IMR-90 (cell line): ENCODE measurements at regions of chr1 and their contacts with region 1.

Region 1: GRCh38 chr1:202750758-202751157 is 40.5 kb upstream of the SYT2 start:
- DNase-seq: no peak
- ATAC-seq: no peak
- H3K4me3 ChIP-seq: no peak overlapping the region
- H3K27ac ChIP-seq: no peak overlapping the region
- H3K4me1 ChIP-seq: 0 out of 2 replicates have a peak, but pooled peaks cover 1% of the 10 kb centered on the region
- H3K27me3 ChIP-seq: no peaks in the 10 kb centered on the region
- CTCF ChIP-seq: 0 out of 2 replicates have a peak, but pooled peaks have one; percentile 10
- POLR2A ChIP-seq: no peak
- RAD21 ChIP-seq: no peak; the same call in 1 of the 2 replicates

Region 2: DNA sequence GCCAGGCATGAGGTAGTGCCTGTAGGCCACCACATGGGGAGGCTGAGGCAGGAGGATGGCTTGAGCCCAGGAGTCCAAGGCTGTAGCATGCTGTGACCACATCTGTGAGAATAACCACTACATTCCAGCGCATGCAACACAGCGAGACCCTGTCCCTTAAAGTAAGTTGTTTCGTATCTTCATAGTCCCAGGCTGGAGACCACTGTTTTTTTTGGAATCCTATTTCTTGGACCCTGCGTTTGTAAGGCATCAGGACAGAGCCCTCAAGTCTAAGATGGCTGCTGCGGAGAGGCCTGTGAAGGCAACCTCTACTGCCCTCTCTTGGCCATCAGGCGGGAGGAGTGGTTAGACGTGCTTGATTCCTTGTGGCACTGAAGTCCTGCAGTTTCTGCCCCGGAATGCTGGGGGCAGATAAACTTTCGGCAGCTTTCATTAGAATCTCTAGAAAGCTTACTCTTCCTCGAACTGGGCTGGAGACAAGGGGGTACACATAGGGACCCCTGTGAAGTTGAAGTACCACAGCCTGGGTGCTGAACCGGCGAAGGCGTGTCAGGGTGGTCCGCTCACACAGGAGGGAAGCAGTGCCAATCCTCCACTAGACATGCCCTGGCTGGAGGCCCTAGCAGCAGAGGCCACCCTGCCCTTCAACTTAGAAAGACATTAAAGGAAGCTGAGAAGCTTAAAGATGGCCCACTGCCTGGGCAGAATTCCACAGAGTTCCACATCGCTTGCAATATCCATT is 101.6 kb after region 1 on chr1:
- CTCF ChIA-PET with region 1: no interaction called
- POLR2A ChIA-PET with region 1: no interaction called
- dilution Hi-C with region 1: no loop called
- in situ Hi-C with region 1: no loop called
- intact Hi-C with region 1: loop called (anchors 5 kb)
- DNase-seq: peak; percentile 69
- ATAC-seq: peak; percentile 98
- H3K4me3 ChIP-seq: no peak overlapping the region
- H3K27ac ChIP-seq: no peak overlapping the region
- H3K4me1 ChIP-seq: no peaks in the 10 kb centered on the region
- H3K27me3 ChIP-seq: no peaks in the 10 kb centered on the region; the same call in 1 of the 2 replicates
- CTCF ChIP-seq: peak; percentile 69
- POLR2A ChIP-seq: no peak
- RAD21 ChIP-seq: peak; percentile 80

Region 3: DNA sequence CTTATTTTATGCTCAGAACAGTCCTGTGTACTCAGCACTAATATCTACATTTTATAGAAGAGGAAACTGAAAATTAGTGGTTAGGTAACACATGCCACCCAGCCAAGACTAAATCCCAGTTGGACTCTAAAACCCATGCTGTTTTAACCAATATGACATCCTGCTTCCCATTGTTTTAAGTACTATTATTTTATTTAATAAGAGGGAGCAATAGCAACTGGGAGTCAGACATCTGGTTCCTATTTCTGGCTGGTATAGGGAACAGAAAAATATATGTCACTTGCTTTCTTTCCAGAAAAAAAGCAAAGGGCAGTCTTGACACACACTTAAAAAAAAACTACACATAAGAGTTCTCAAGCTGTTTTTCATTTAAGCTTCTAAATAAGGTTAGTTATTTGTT is 164.4 kb after region 1 on chr1:
- CTCF ChIA-PET with region 1: no interaction called
- POLR2A ChIA-PET with region 1: no interaction called
- dilution Hi-C with region 1: no loop called
- in situ Hi-C with region 1: loop called (anchors 10 kb)
- intact Hi-C with region 1: loop called (anchors 5 kb)
- DNase-seq: no peak
- ATAC-seq: no peak
- H3K4me3 ChIP-seq: no peak overlapping the region
- H3K27ac ChIP-seq: no peak overlapping the region
- H3K4me1 ChIP-seq: no peaks in the 10 kb centered on the region
- H3K27me3 ChIP-seq: no peaks in the 10 kb centered on the region
- CTCF ChIP-seq: no peak
- POLR2A ChIP-seq: no peak
- RAD21 ChIP-seq: no peak